Gastrocnemius medialis (tissue), 4 donors: ENCODE measurements at regions of chr19 and their contacts with region 1.

Region 1: DNA sequence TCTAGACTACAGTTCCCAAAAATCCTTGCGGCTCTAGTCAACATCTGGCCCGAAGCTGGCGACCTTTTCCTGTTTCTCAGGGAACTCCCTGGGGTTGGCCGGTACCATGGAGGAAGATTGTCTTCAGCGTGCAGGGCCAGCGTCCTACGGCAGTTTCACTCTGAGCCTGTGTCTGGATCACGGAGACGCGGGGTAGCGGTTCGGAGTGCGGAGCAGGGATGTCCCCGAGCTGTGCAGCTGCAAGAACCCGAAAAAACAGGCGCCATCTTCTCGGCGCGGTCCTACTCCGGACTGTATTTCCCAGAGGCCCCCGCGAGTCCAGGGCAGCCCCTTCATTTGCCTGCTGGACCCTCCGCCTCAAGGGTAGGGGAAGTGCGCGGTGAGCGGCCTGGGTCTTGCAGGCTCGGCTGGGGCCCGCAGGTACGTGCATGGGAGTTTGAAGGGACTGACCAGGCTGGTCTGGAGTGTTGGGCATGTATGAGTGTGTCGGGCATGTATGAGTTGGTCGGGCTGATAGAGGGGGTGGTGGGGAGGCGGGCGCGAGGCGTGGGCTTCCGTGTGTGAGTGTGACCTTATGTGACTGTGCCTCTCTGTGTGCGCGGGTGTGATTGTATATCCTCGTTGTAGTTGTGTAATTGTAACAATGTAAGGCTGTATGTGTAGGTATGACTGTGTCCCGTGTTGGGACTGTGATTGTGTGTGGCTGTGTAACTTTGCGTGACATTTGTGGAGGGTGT is at the start of gene ZNF383:
- DNase-seq: peak; percentile 81 to 83
- ATAC-seq: peak; percentile 95 to 96
- H3K4me3 ChIP-seq: peak within 1 kb of the TSS; percentile 82 to 92 (median 88)
- H3K27ac ChIP-seq: peak within 1 kb of the TSS; percentile 89 to 93 (median 91)
- H3K4me1 ChIP-seq: peaks cover 3 to 11% of the 10 kb centered on the region in 2 donors
- H3K27me3 ChIP-seq: no peaks in the 10 kb centered on the region
- CTCF ChIP-seq: no peak
- POLR2A ChIP-seq: peak; percentile 7 to 38
- total RNA-seq, gene ZNF383: 2.3 to 8.4 (median 4.0) TPM

Region 2: GRCh38 chr19:36573020-36573885 is 644.8 kb before region 1 on chr19 and contains the start of gene ZNF529:
- in situ Hi-C with region 1: no loop called
- intact Hi-C with region 1: loop called (anchors 5 kb)
- DNase-seq: peak; percentile 79 to 85
- ATAC-seq: peak; percentile 99
- H3K4me3 ChIP-seq: peak within 1 kb of the TSS; percentile 85 to 100 (median 94)
- H3K27ac ChIP-seq: peak within 1 kb of the TSS; percentile 81 to 91 (median 88)
- H3K4me1 ChIP-seq: peaks cover 16 to 17% of the 10 kb centered on the region in 2 donors
- H3K27me3 ChIP-seq: no peaks in the 10 kb centered on the region
- CTCF ChIP-seq: no peak
- POLR2A ChIP-seq: peak; percentile 73 to 75
- total RNA-seq, gene ZNF529: 4.1 to 6.6 (median 5.4) TPM

Region 3: DNA sequence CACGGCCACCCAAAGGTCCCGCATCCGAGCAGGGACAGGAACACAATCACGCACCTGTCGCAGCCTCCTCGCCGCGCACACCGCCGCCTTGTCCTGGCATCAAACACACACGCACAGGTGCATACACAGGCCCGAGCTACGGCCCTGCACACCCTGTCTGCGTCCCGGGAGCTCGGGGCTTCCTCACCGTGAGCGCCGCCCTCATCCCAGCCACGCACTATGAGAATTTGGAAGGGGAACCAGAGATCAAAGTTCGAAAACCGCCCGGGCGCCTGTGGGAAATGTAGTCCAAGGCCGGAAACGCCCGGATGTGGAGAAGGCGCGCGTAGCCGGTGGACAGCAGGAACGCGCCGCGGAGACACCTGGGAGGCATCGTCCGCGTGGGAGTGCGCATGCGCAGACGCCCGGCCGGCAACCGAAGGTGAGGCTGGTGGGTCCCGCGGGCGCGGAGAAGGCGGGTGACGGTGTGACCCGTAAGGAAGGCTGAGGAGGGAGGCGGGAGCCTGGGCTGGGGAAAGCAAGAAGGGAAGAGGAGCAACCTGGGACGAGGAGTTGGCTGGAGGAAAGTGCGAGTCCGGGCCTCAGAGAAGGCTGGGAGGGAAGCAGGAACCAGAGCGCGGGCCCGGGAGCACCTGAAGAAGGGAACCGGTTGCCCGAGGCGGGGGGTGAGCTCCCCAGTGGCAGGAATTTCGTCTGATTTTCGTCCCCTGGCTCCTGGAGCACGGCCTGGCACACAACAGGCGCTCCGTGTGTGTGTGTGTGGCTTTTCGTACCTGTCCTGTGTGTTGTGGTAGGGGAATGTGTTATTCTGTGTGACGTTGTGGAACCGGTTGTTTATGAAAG is 530.6 kb before region 1 on chr19 and contains the start of gene ZNF567:
- in situ Hi-C with region 1: no loop called
- intact Hi-C with region 1: loop called (anchors 5 kb)
- DNase-seq: peak; percentile 93 to 96
- ATAC-seq: peak; percentile 99
- H3K4me3 ChIP-seq: peak within 1 kb of the TSS; percentile 76 to 96 (median 90)
- H3K27ac ChIP-seq: peak within 1 kb of the TSS; percentile 77 to 87 (median 81)
- H3K4me1 ChIP-seq: peaks cover 13 to 16% of the 10 kb centered on the region in 2 donors
- H3K27me3 ChIP-seq: no peaks in the 10 kb centered on the region
- CTCF ChIP-seq: no peak
- POLR2A ChIP-seq: peak; percentile 68 to 74
- total RNA-seq, gene ZNF567: 1.1 to 3.5 (median 1.9) TPM

Region 4: DNA sequence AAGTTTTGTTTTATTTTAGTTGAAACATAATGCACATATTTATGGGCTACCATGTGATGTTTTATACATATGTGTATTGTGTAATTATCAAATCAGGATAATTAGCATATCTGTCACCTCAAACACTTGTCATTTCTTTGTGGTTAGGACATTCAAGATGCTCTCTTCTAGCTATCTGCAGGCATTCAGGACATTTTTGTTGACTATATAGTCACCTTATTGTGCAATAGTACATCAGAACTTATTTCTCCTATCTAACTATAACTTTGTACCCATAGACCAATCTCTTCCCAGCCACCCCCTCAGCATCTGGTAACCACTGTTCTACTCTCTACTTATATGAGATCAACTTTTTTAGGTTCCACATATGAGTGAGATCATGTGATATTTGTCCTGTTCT is 119.5 kb before region 1 on chr19:
- in situ Hi-C with region 1: no loop called
- intact Hi-C with region 1: no loop called
- DNase-seq: no peak
- ATAC-seq: no peak
- H3K4me3 ChIP-seq: no peak overlapping the region
- H3K27ac ChIP-seq: no peak overlapping the region
- H3K4me1 ChIP-seq: no peaks in the 10 kb centered on the region
- H3K27me3 ChIP-seq: no peaks in the 10 kb centered on the region
- CTCF ChIP-seq: no peak
- POLR2A ChIP-seq: no peak

Region 5: DNA sequence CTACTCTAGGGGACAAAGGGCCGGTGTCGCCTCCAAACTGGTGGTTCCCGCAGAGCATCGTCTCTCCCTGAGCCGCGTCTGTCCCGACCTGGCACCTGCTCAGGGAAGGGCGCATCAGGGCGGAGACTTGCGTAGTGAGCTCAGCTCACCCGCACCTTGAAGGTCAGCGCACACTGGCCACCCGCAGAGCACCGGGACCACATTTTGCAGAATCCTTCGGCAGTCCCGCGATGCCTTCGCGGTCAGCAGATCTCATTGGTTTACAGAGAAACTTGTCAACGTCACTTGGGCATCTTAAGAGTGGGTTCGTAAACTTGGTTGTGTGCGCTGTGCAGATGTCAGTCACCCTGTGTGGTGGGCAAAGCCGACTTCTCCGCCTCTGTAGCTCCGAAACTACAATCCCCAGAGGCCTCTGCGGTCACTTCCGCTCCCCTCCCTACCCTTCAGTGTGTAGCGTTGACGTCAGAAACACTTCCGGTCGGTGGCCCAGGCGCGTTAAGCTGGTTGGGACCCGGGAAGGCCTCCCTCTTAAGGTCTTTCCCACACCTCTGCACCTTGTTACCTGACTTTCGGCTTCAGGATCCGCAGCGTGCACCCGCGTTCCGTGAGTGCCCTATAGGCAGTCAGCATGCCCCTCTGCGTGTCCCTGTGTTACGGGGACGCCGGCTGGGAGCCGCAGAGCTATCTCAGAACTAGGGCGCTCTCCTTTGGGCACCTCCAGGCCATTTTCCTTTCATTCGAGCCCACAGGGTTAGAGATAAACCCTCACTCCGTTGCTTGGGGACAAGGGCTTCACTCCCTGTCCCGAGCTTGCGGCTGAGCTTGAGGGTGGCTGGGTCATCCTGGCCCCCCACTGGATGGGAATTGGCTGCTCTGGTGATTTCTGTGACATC is 116.4 kb after region 1 on chr19:
- in situ Hi-C with region 1: no loop called
- intact Hi-C with region 1: loop called (anchors 5 kb)
- DNase-seq: peak; percentile 87 to 91
- ATAC-seq: peak; percentile 99 to 100
- H3K4me3 ChIP-seq: peak overlapping the region; percentile 66 to 93 (median 82)
- H3K27ac ChIP-seq: peak overlapping the region; percentile 83 to 91 (median 88)
- H3K4me1 ChIP-seq: peaks cover 16 to 25% of the 10 kb centered on the region in 2 donors
- H3K27me3 ChIP-seq: no peaks in the 10 kb centered on the region
- CTCF ChIP-seq: no peak
- POLR2A ChIP-seq: peak; percentile 29 to 61

Region 6: GRCh38 chr19:37506387-37507166 is 288.6 kb after region 1 on chr19 and contains the start of gene ZNF793:
- in situ Hi-C with region 1: no loop called
- intact Hi-C with region 1: loop called (anchors 5 kb)
- DNase-seq: peak; percentile 26 to 58
- ATAC-seq: peak; percentile 87 to 92
- H3K4me3 ChIP-seq: peak within 1 kb of the TSS; percentile 59 to 78 (median 76)
- H3K27ac ChIP-seq: peak within 1 kb of the TSS; percentile 78 to 85 (median 82)
- H3K4me1 ChIP-seq: peaks cover 0 to 4% of the 10 kb centered on the region in 2 donors
- H3K27me3 ChIP-seq: no peaks in the 10 kb centered on the region
- CTCF ChIP-seq: peak in 1 of 5 experiments; percentile 28
- POLR2A ChIP-seq: peak in 1 of 2 donors; percentile 7
- total RNA-seq, gene ZNF793: 0.19 to 1.2 (median 0.76) TPM

Region 7: DNA sequence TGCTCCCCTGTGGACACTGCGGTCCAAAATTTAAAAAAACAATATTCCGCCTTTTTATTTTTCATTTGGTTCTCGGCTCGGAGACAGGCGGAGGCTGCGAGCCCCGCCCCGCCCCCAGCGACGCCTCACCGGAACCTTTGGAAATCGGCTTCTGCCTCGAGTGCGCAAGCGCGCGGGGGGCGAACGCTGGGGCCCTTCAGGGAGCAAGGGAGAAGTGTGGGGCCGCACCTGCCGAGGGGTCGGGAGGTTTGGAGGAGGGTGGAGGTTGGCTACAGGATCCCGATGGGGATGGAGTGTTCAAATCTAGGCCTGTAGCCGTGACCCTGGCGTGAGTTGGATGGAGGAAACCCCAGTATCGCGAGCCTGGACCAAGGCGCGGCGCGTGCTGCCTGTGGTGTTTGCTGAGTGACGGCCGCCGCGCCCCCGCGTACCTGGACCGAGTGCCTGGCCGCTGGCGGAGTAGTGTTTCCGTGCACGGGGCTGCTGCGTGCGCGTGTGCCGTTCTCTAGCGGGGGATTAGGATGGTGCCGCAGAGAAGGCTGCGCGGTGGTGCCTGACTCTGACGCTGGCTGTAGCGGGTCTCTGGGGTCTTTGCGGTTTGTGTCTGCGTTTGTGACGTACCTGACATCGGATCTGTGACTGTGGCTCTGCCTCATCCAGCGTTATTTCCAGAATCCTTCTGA is 437.8 kb after region 1 on chr19:
- in situ Hi-C with region 1: no loop called
- intact Hi-C with region 1: loop called (anchors 1 kb)
- DNase-seq: peak; percentile 63 to 81
- ATAC-seq: peak; percentile 85 to 93
- H3K4me3 ChIP-seq: peak overlapping the region; percentile 75 to 94 (median 84)
- H3K27ac ChIP-seq: peak overlapping the region; percentile 90 to 94 (median 93)
- H3K4me1 ChIP-seq: peaks cover 21 to 22% of the 10 kb centered on the region in 2 donors
- H3K27me3 ChIP-seq: no peaks in the 10 kb centered on the region
- CTCF ChIP-seq: peak in 1 of 5 experiments; percentile 31
- POLR2A ChIP-seq: peak; percentile 29 to 32